Gastrocnemius medialis (tissue), 4 donors: ENCODE measurements at regions of chr2 and their contacts with region 1.

Region 1: DNA sequence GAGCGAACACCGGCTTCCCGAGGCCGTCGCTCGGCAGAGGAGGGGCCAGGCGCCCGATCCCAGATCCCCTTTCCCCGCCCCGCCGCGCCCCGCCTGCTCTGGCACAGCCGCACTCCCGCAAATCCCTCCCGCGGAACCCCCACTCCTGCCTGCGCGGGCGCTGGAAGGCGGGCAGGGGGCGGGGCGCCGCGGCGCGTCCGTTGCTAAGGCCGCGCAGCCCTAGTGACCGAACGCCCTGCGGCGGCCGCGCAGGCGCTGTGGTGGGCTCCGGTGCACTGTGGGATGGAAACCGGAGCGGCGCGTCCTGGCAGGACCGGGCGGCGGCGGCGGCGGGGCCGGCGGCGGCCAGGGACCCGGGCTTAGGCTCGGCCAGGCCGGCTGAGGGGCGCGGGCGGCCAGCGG is at the start of gene TRAF3IP1:
- DNase-seq: peak; percentile 83 to 91
- ATAC-seq: peak; percentile 80 to 81
- H3K4me3 ChIP-seq: peak within 1 kb of the TSS; percentile 65 to 74 (median 70)
- H3K27ac ChIP-seq: peak within 1 kb of the TSS; percentile 75 to 89 (median 81)
- H3K4me1 ChIP-seq: peaks cover 21 to 31% of the 10 kb centered on the region in 2 donors
- H3K27me3 ChIP-seq: no peaks in the 10 kb centered on the region
- CTCF ChIP-seq: no peak
- POLR2A ChIP-seq: peak; percentile 50 to 74
- total RNA-seq, gene TRAF3IP1: 8.5 to 20.8 (median 10.9) TPM

Region 2: DNA sequence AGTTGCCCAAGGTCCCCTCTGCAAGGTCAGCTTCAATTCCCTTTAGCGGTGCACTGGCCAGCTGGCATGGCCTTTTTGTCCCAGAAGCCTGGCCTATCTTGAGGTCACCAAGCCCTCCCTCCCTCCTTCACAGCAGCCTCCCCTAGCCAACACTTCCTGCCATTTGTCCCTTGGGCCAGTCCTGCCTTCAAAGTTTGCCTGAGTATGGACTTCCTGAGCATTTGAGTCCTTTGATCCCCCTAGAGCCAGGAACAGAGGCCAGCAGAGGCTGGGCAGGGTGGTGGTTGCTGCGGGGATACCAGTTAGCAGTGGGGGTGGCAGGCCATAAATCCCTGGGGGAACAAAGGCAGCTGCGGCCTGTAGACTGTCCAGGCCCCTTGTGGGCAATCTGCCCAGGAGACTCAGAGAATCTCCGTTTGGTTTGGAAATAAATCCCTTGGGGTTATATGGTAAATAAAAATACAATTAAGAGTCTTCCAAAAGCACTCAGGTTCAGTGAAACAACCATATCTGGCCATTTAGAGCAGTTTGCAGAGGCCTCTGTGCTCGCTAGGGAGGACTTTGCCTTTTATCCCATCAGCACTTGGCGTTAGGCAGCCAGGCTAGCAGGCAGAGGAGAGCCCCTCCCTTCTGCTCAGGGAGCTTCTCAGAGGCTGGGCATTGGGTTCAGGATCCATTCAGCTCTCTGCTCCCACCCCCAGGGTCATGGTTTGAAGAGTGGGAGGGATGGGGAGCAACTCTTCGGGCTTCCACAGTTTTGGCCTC is 77.3 kb before region 1 on chr2:
- in situ Hi-C with region 1: no loop called
- intact Hi-C with region 1: loop called (anchors 5 kb)
- DNase-seq: peak; percentile 37 to 81
- ATAC-seq: peak in 1 of 2 donors; percentile 15
- H3K4me3 ChIP-seq: no peak overlapping the region
- H3K27ac ChIP-seq: peak overlapping the region; percentile 66 to 78 (median 74)
- H3K4me1 ChIP-seq: peaks cover 58% of the 10 kb centered on the region in 2 donors
- H3K27me3 ChIP-seq: no peaks in the 10 kb centered on the region
- CTCF ChIP-seq: no peak
- POLR2A ChIP-seq: no peak

Region 3: GRCh38 chr2:238370823-238371372 is 50.7 kb after region 1 on chr2:
- in situ Hi-C with region 1: no loop called
- intact Hi-C with region 1: no loop called
- DNase-seq: no peak
- ATAC-seq: peak; percentile 70 to 74
- H3K4me3 ChIP-seq: no peak overlapping the region
- H3K27ac ChIP-seq: no peak overlapping the region
- H3K4me1 ChIP-seq: peaks cover 0 to 3% of the 10 kb centered on the region in 2 donors
- H3K27me3 ChIP-seq: no peaks in the 10 kb centered on the region
- CTCF ChIP-seq: peak; percentile 60 to 74 (median 68)
- POLR2A ChIP-seq: no peak